ENCODE measurements at regions of chr12 and their contacts with region 1.

Region 1: DNA sequence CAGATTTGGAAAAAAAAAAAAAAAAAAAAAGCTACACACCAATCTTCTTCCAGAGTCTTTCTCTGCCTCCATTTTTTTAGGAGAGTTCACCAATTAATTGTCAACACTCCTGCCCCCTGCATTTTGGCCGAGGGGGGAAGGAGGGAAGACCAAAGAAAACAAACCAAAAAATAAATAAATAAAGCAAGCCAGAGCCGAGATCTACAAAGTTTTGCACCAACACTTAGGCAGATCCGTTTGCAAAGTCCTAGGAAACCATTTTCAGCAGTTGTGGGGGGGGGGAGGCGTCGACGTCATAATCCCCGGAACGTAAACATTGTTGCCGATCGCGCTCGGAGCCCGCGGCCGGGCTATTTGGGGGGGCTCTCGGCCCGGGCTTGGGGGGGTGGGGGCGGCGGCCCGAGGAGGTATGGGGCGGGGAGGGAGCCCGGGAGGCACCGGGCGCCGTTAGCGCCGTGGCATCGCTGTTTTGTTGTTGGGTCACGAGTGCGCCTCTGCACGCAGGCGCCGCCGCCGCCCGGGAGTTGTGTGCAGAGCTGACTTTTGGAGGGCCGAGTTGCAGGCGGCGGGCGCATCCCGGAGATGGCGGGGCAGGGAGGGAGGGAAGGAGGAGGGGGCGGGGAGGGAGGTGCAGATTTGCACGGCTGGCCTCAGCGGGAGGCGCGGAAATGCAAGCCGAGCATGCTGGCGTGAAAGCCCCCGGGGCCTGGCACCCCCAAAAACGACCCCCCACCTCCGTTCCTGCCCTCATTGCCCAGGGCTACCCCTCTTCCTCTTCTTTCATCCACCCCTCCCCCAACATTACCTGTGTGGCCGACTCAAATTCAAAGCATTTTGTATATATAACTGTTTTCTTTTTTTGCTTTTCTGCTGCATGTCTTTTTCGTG is 598 bp downstream of the KDM2B start:
- DNase-seq: peak; percentile 78 to 91
- H3K4me3 ChIP-seq: peak overlapping the region; percentile 64 to 82 (median 74)
- H3K27ac ChIP-seq: peak overlapping the region; percentile 77 to 93 (median 90)
- H3K4me1 ChIP-seq: peaks cover 38 to 74% (median 54%) of the 10 kb centered on the region in 4 donors
- H3K27me3 ChIP-seq: no peaks in the 10 kb centered on the region
- CTCF ChIP-seq: no peak
- EP300 ChIP-seq: no peak
- POLR2A ChIP-seq: no peak

Region 2: DNA sequence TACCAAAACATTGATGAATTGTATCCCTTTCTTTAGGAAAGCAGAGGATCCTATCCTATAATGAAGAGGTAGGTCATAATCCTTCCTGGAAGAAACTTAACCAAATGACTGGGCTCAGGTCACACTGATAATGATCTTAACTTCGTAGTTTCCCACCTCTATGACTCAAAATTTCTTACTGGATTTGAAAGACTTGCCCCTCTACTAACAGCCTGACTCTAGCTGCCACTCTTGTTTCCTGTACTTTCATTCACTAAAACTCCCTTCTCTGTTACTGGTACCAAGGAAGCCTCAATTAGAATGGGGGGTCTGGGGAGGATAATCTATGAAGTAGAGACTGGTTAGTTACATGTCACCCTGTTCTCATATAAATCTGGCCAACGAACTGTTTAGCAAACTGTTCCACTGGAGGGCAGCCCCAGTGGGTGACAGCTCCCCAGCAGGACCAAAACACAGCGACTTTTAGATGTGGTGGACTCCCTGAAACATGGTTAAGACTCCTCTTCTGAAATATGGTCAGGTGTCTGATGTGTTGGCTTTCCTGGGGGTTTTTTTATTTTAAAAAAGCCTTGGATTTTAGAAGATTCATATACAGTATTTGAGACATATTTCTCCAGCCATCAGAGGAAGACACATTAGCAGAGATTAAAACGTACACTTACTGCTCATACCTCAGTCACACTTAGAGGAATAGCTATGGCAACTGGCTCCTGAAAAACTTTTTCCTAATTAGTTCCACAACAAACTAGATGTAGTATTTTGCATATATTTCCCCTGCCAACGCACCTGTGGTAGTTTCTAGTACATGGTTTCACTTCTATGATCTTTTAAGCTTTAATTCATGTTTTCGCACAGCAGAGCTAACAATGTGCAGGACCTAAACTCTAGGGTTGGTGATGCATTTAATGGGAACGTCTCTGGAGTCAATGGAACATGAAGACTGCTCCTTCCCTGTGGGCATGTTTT is 782.3 kb before region 1 on chr12:
- intact Hi-C with region 1: no loop called
- DNase-seq: no peak
- H3K4me3 ChIP-seq: no peak overlapping the region
- H3K27ac ChIP-seq: no peak overlapping the region
- H3K4me1 ChIP-seq: peaks cover 0 to 11% (median 3%) of the 10 kb centered on the region in 4 donors
- H3K27me3 ChIP-seq: no peaks in the 10 kb centered on the region
- CTCF ChIP-seq: no peak
- EP300 ChIP-seq: no peak
- POLR2A ChIP-seq: no peak

Region 3: GRCh38 chr12:121287267-121287954 is 292.8 kb before region 1 on chr12:
- intact Hi-C with region 1: no loop called
- DNase-seq: no peak
- H3K4me3 ChIP-seq: no peak overlapping the region
- H3K27ac ChIP-seq: no peak overlapping the region
- H3K4me1 ChIP-seq: peaks cover 19 to 74% (median 49%) of the 10 kb centered on the region in 4 donors
- H3K27me3 ChIP-seq: no peaks in the 10 kb centered on the region
- CTCF ChIP-seq: no peak
- EP300 ChIP-seq: no peak
- POLR2A ChIP-seq: no peak

Region 4: GRCh38 chr12:121620328-121620891 is 40.2 kb after region 1 on chr12:
- intact Hi-C with region 1: loop called (anchors 5 kb)
- DNase-seq: no peak
- H3K4me3 ChIP-seq: no peak overlapping the region
- H3K27ac ChIP-seq: no peak overlapping the region
- H3K4me1 ChIP-seq: peaks cover 5 to 14% (median 6%) of the 10 kb centered on the region in 4 donors
- H3K27me3 ChIP-seq: no peaks in the 10 kb centered on the region
- CTCF ChIP-seq: no peak
- EP300 ChIP-seq: no peak
- POLR2A ChIP-seq: no peak

Region 5: GRCh38 chr12:121668750-121669520 is 88.7 kb after region 1 on chr12:
- intact Hi-C with region 1: no loop called
- DNase-seq: peak; percentile 39 to 83
- H3K4me3 ChIP-seq: no peak overlapping the region
- H3K27ac ChIP-seq: no peak overlapping the region
- H3K4me1 ChIP-seq: peaks cover 15 to 24% (median 18%) of the 10 kb centered on the region in 4 donors
- H3K27me3 ChIP-seq: no peaks in the 10 kb centered on the region
- CTCF ChIP-seq: peak in 4 of 7 experiments; percentile 35 to 61 (median 46)
- EP300 ChIP-seq: no peak
- POLR2A ChIP-seq: no peak